ENCODE measurements at regions of chr2 and their contacts with region 1.

Region 1: DNA sequence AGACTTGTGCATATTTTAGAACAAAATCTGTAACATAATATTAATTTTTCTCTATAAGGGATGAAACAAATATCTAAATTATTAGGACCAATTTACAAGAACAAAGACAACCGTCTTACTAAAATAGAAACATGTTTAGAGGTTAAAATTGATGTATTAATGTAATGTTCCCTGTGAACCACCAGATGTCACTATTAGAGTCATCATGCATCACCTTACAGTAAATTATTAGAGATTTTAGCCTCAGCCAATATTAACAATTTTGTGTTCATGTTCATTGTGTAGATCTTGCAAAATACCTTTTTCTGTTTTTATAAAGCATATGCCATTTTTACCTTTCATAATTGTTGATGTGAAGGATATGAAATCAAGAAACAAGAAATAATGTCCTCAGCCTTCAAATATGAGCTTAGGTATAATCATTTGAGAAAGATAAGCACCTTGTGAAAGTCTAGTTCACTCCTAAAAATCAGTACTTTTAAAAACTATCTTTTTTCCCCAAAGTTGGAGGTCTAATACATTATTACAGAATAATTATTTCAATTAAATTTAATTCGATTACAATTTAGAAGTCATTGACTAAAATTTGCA is 344.3 kb upstream of the KCNH7 start:
- DNase-seq: no peak
- ATAC-seq: no peak
- H3K4me3 ChIP-seq: no peak overlapping the region
- H3K27ac ChIP-seq: no peak overlapping the region
- H3K4me1 ChIP-seq: no peaks in the 10 kb centered on the region
- H3K27me3 ChIP-seq: peaks cover 0 to 2% (median 0%) of the 10 kb centered on the region in 3 donors
- CTCF ChIP-seq: peak; percentile 64

Region 2: DNA sequence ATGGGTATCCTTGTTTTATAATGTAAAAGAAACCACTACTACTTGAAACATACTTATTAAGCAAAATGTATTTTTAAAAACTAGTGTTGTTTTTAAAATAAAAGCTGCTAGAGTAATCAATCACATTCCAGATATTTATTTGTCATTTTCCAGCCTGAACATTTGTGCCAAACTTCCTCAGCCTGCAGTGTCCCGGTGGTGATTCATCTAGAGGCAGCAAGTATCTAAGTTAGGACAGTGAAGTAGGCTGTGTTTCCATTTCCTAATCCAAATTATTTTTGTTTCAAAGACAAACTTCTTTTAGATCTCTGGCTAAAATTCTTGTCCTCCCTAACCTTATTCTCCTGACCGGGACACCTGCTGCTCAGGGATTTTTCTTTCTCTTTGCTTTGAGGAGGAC is 1018.1 kb before region 1 on chr2:
- intact Hi-C with region 1: no loop called
- DNase-seq: no peak
- ATAC-seq: no peak
- H3K4me3 ChIP-seq: no peak overlapping the region
- H3K27ac ChIP-seq: no peak overlapping the region
- H3K4me1 ChIP-seq: no peaks in the 10 kb centered on the region
- H3K27me3 ChIP-seq: no peaks in the 10 kb centered on the region
- CTCF ChIP-seq: no peak

Region 3: GRCh38 chr2:162967147-162967546 is 215.7 kb before region 1 on chr2:
- intact Hi-C with region 1: no loop called
- DNase-seq: no peak
- ATAC-seq: no peak
- H3K4me3 ChIP-seq: no peak overlapping the region
- H3K27ac ChIP-seq: no peak overlapping the region
- H3K4me1 ChIP-seq: no peaks in the 10 kb centered on the region
- H3K27me3 ChIP-seq: no peaks in the 10 kb centered on the region
- CTCF ChIP-seq: no peak

Region 4: DNA sequence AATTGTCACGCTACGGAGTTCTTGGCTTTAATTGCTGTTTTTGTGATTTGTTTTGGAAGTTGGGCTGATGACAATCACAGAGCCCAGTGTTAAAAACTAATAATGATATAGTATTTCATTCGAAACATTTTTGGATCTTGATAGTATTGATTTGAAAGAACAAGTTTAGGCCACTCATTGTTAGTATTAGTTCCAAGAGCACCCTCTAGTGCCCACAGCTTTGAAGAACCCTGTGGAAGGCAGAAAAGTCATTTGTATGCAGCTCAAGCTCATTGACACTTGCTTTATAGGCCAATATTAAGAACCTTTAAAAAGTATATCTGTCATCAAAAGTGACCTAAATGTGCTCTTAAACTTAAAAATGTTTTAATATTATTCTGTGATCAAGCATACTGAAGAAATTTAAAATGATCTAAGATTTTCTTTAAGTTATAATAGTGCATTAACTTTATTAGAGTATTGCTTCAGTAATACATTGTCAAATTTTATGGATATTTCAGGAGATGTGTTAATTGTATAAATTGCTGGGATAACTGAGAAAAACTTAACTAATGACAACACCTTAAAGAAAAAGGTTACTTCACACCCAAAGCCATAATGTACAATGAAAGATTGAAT is 1247.4 kb after region 1 on chr2:
- intact Hi-C with region 1: loop called in 1 of 2 experiments (anchors 10 kb)
- DNase-seq: no peak
- ATAC-seq: peak in 1 of 4 donors; percentile 46
- H3K4me3 ChIP-seq: no peak overlapping the region
- H3K27ac ChIP-seq: no peak overlapping the region
- H3K4me1 ChIP-seq: no peaks in the 10 kb centered on the region
- H3K27me3 ChIP-seq: no peaks in the 10 kb centered on the region
- CTCF ChIP-seq: peak; percentile 51

Region 5: DNA sequence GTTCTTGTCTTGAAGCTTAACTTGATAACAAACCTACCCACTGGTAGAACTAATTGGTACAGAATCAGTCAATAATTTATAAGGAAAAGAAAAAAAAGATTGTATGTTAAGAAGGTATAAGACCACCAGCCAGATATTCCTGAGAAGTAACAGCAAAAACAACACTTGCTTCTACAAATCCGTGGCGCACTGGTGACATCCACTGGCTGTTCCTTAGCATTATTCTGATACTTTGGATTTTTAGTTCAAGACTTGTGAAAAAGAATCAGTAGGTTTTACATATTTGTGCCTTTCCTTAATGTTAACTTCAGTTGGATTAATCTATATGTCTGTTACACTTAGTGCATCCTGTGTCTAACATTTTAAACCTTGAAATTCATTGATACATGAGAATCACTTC is 1296.6 kb after region 1 on chr2:
- intact Hi-C with region 1: loop called (anchors 5 to 10 kb)
- DNase-seq: no peak
- ATAC-seq: no peak
- H3K4me3 ChIP-seq: no peak overlapping the region
- H3K27ac ChIP-seq: no peak overlapping the region
- H3K4me1 ChIP-seq: no peaks in the 10 kb centered on the region
- H3K27me3 ChIP-seq: no peaks in the 10 kb centered on the region
- CTCF ChIP-seq: peak; percentile 51

Region 6: DNA sequence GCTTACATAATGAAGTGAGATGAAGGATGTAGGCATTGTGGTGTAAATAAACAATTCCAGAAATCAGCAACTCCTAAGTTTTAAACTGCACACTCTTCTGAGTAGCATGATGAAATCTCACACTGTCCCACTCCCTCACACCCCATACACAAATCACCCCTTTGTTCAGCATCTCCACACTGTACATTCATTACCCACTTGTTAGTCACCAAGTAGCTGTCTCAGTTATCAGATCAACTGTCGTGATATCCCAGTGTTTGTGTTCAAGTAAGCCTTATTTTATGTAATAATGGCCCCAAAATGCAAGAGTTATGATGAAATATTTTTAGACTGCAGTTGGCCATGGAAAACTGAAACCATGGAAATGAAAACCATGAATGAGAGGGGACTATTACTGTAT is 1302.7 kb after region 1 on chr2:
- intact Hi-C with region 1: loop called in 1 of 2 experiments (anchors 10 kb)
- DNase-seq: no peak
- ATAC-seq: no peak
- H3K4me3 ChIP-seq: no peak overlapping the region
- H3K27ac ChIP-seq: no peak overlapping the region
- H3K4me1 ChIP-seq: no peaks in the 10 kb centered on the region
- H3K27me3 ChIP-seq: no peaks in the 10 kb centered on the region
- CTCF ChIP-seq: no peak